ENCODE measurements at regions of chr17 and their contacts with region 1.

Region 1: GRCh38 chr17:68782789-68783188 is 172.4 kb downstream of the ABCA8 start:
- DNase-seq: peak in 4 of 7 donors; percentile 33 to 73 (median 44)
- H3K4me3 ChIP-seq: no peak overlapping the region
- H3K27ac ChIP-seq: no peak overlapping the region
- H3K4me1 ChIP-seq: peaks cover 8 to 14% of the 10 kb centered on the region in 2 donors
- H3K27me3 ChIP-seq: no peaks in the 10 kb centered on the region
- CTCF ChIP-seq: no peak
- POLR2A ChIP-seq: no peak

Region 2: DNA sequence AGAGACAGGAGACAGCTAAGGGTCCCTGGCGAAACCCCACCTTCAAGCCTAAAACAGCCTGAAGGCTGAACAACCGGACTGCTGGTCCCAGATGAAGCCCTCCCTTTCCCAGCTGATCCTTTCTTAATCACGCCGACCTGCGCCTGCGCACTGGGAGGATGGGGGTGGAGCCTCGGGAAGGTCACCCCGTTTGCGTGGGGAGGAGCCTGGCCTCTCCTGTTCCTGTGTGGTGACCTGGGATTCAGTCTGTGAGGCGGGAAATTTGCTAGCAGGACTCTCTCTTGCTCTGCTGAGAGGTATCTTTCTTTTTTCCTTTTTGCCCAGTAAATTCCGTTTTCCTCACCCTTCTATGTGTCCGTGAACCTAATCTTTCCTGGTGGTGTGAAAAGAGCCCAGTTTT is 191.2 kb before region 1 on chr17:
- intact Hi-C with region 1: no loop called
- DNase-seq: peak in 5 of 7 donors; percentile 23 to 58 (median 48)
- H3K4me3 ChIP-seq: no peak overlapping the region
- H3K27ac ChIP-seq: no peak overlapping the region
- H3K4me1 ChIP-seq: peaks cover 0 to 10% of the 10 kb centered on the region in 2 donors
- H3K27me3 ChIP-seq: no peaks in the 10 kb centered on the region
- CTCF ChIP-seq: no peak
- POLR2A ChIP-seq: no peak

Region 3: DNA sequence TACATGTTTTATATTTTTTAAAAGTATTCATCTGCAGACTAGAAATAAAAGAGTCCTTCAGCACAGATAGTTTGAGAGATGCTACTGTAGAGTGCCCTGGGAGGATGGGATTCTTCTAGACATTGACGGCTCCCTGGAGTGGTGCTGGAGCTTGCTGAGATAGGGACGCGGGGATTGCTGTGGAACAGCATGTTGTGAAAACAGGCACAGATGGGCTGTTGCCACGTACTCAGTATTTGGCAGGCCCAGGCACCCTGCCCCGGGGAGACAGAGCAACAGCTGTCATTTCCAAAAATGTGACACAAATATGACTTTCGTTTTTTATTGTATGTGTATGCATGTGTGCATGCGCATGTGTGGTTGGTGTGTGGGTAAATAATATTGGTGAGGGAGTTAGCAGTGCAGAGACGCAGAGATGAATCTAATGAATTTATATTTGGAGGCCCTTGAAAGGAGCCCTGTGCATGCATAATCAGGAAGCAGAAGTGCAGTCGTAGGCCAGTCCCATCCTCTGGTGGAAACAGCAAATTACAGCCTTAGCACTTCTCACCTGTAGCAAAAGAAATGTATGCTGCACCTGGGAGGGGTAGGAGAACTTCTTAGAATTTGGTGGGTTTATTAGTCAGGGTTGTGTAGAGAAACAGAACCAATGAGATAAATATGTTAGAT is 178.6 kb after region 1 on chr17:
- intact Hi-C with region 1: loop called in 1 of 2 experiments (anchors 10 kb)
- DNase-seq: no peak
- H3K4me3 ChIP-seq: no peak overlapping the region
- H3K27ac ChIP-seq: no peak overlapping the region
- H3K4me1 ChIP-seq: no peaks in the 10 kb centered on the region
- H3K27me3 ChIP-seq: no peaks in the 10 kb centered on the region
- CTCF ChIP-seq: no peak
- POLR2A ChIP-seq: no peak

Measured in adrenal gland (tissue), 19 donors.